Transverse colon (tissue), 4 donors: ENCODE measurements at regions of chr15 and their contacts with region 1.

Region 1: GRCh38 chr15:33737687-33738601 is 230.4 kb upstream of the CHRM5 start:
- DNase-seq: peak; percentile 12
- H3K4me3 ChIP-seq: no peak overlapping the region
- H3K27ac ChIP-seq: no peak overlapping the region
- H3K4me1 ChIP-seq: no peaks in the 10 kb centered on the region
- H3K27me3 ChIP-seq: no peaks in the 10 kb centered on the region
- CTCF ChIP-seq: peak; percentile 46 to 75 (median 65)
- EP300 ChIP-seq: no peak
- POLR2A ChIP-seq: no peak

Region 2: DNA sequence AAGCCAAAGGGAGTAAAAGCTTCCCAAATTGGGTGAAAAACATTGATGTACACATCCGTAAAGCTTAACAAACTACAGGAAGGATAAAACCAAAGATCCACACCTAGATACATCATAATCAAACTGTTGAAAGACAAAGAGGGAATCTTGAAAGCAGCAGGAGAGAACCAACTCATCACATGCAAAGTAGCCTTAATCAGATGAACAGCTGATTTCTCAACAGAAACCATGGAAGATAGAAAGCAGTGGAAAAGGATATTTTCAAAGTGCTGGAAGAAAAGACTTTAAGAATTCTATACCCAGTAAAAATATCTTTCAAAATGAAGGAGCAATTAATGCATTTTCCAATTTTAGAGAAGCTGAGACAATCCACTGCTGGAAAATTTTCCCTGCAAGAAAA is 1670.8 kb before region 1 on chr15:
- in situ Hi-C with region 1: no loop called
- intact Hi-C with region 1: loop called (anchors 5 kb)
- DNase-seq: no peak
- H3K4me3 ChIP-seq: no peak overlapping the region
- H3K27ac ChIP-seq: no peak overlapping the region
- H3K4me1 ChIP-seq: no peaks in the 10 kb centered on the region
- H3K27me3 ChIP-seq: no peaks in the 10 kb centered on the region
- CTCF ChIP-seq: no peak
- EP300 ChIP-seq: no peak
- POLR2A ChIP-seq: no peak

Region 3: DNA sequence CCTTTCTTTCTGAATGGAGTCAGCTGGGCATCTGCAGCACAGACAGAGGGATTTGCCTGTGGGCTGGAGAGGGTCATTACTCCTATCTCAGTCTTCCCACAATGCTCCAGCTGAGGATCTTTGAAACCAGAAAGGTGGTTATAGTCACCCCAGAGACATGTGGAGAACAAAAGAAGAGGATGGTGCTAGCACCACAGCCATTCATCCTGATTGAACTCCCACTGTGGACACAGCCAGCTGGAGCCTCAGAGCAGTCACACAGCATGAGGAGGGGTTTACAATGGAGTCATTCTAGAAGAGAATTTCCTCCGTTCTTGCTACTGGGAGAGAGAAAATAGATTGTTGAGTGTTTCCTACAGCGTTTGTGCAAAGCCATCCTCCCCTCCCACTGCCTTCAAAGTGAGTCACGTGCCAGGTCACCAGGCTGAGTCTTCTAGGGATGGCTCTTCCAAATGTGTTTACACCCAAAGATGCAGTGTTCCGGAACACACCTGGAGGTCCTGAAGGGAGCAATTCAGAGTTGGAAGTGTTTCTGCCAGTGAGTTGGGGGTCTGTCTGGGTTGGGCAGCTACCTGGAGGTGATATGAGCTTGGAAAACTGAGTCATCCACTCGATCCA is 1039.1 kb before region 1 on chr15:
- in situ Hi-C with region 1: no loop called
- intact Hi-C with region 1: loop called (anchors 10 kb)
- DNase-seq: no peak
- H3K4me3 ChIP-seq: no peak overlapping the region
- H3K27ac ChIP-seq: no peak overlapping the region
- H3K4me1 ChIP-seq: peaks cover 0 to 7% (median 4%) of the 10 kb centered on the region in 4 donors
- H3K27me3 ChIP-seq: no peaks in the 10 kb centered on the region
- CTCF ChIP-seq: no peak
- EP300 ChIP-seq: no peak
- POLR2A ChIP-seq: no peak

Region 4: GRCh38 chr15:33547876-33548275 is 190.1 kb before region 1 on chr15:
- in situ Hi-C with region 1: no loop called
- intact Hi-C with region 1: no loop called
- DNase-seq: no peak
- H3K4me3 ChIP-seq: no peak overlapping the region
- H3K27ac ChIP-seq: no peak overlapping the region
- H3K4me1 ChIP-seq: no peaks in the 10 kb centered on the region
- H3K27me3 ChIP-seq: no peaks in the 10 kb centered on the region
- CTCF ChIP-seq: no peak
- EP300 ChIP-seq: no peak
- POLR2A ChIP-seq: no peak

Region 5: GRCh38 chr15:33963831-33964664 is 226.1 kb after region 1 on chr15:
- in situ Hi-C with region 1: loop called in 2 of 4 experiments (anchors 25 kb)
- intact Hi-C with region 1: no loop called
- DNase-seq: no peak
- H3K4me3 ChIP-seq: no peak overlapping the region
- H3K27ac ChIP-seq: no peak overlapping the region
- H3K4me1 ChIP-seq: no peaks in the 10 kb centered on the region
- H3K27me3 ChIP-seq: no peaks in the 10 kb centered on the region
- CTCF ChIP-seq: peak; percentile 18 to 45 (median 37)
- EP300 ChIP-seq: no peak
- POLR2A ChIP-seq: no peak

Region 6: DNA sequence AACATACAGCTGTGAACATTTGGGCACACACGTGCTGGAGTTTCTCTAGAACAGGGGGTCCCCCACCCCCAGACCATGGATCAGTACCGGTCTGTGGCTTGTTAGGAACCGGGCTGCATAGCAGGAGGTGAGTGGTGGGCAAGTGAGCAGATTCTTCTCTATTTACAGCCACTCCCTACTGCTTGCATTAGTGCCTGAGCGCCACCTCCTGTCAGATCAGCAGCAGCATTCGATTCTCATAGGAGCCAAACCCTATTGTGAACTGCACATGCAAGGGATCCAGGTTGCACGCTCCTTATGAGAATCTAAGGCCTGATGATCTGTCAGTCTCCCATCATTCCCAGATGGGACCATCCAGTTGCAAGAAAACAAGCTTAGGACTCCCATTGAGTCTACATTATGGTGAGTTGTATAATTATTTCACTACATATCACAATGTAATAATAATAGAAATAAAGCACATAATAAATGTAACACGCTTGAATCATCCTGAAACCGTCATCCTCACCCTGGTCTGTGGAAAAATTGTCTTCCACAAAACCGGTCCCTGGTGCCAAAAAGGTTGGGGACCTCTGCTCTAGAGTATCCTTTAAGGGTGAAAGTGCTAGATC is 256.2 kb after region 1 on chr15:
- in situ Hi-C with region 1: loop called in 1 of 4 experiments (anchors 25 kb)
- intact Hi-C with region 1: no loop called
- DNase-seq: no peak
- H3K4me3 ChIP-seq: no peak overlapping the region
- H3K27ac ChIP-seq: no peak overlapping the region
- H3K4me1 ChIP-seq: no peaks in the 10 kb centered on the region
- H3K27me3 ChIP-seq: no peaks in the 10 kb centered on the region
- CTCF ChIP-seq: no peak
- EP300 ChIP-seq: no peak
- POLR2A ChIP-seq: no peak